GM18951 (cell line): ENCODE measurements at regions of chr6 and their contacts with region 1.

Region 1: GRCh38 chr6:131909408-131910218 is 41.6 kb downstream of the CCN2 start:
- POLR2A ChIP-seq: no peak

Region 2: GRCh38 chr6:130769861-130770260 is 1139.8 kb before region 1 on chr6:
- in situ Hi-C with region 1: no loop called
- POLR2A ChIP-seq: no peak

Region 3: GRCh38 chr6:131390322-131390721 is 519.3 kb before region 1 on chr6:
- in situ Hi-C with region 1: no loop called
- POLR2A ChIP-seq: no peak

Region 4: GRCh38 chr6:131694831-131695426 is 214.7 kb before region 1 on chr6:
- in situ Hi-C with region 1: loop called (anchors 25 kb)
- POLR2A ChIP-seq: no peak

Region 5: DNA sequence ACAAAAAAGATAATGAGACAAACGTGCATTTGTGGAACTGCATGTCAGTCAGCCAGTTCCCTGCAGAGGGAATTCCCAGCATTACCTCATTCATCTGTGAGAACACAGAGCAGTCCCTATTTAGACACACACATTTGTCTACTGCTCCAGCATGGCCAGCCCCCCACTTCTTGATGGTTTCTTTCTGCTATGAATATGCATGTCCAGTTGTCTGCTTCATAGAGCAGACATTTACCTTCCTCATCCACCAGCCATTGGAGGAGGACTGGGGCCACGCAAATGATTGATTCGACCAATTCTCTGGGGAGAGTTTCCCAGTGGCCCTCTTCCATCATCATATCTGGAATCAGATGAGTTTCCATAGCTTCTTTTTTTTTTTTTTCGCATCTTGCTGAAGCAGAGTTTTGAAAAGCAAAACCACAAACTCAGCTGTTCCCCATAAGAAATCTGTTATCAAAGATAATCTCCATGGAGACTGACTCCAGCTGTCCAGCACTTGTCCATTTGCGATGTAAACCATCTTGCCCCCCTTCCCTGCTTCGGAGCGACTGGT is 90.0 kb before region 1 on chr6:
- in situ Hi-C with region 1: no loop called
- POLR2A ChIP-seq: no peak

Region 6: GRCh38 chr6:132218059-132218696 is 308.6 kb after region 1 on chr6:
- in situ Hi-C with region 1: loop called (anchors 25 kb)
- POLR2A ChIP-seq: no peak